ENCODE measurements at regions of chr20 and their contacts with region 1.

Region 1: GRCh38 chr20:34538671-34539123 is 19.8 kb upstream of the MAP1LC3A start:
- DNase-seq: peak; percentile 45
- H3K4me3 ChIP-seq: no peak overlapping the region
- H3K27ac ChIP-seq: no peak overlapping the region
- H3K4me1 ChIP-seq: no peaks in the 10 kb centered on the region
- H3K27me3 ChIP-seq: no peaks in the 10 kb centered on the region
- CTCF ChIP-seq: peak; percentile 67

Region 2: GRCh38 chr20:34324541-34324940 is 214.2 kb before region 1 on chr20:
- CTCF ChIA-PET with region 1: no interaction called
- POLR2A ChIA-PET with region 1: no interaction called
- intact Hi-C with region 1: no loop called
- DNase-seq: no peak
- H3K4me3 ChIP-seq: no peak overlapping the region
- H3K27ac ChIP-seq: no peak overlapping the region
- H3K4me1 ChIP-seq: peaks cover 14% of the 10 kb centered on the region
- H3K27me3 ChIP-seq: no peaks in the 10 kb centered on the region
- CTCF ChIP-seq: no peak

Region 3: GRCh38 chr20:34704177-34705007 is 165.7 kb after region 1 on chr20 and contains the start of gene TP53INP2:
- CTCF ChIA-PET with region 1: interaction called, 3 read pairs
- POLR2A ChIA-PET with region 1: no interaction called
- intact Hi-C with region 1: loop called (anchors 5 kb)
- DNase-seq: peak; percentile 90
- H3K4me3 ChIP-seq: peak within 1 kb of the TSS; percentile 81
- H3K27ac ChIP-seq: peak within 1 kb of the TSS; percentile 99
- H3K4me1 ChIP-seq: peaks cover 12% of the 10 kb centered on the region
- H3K27me3 ChIP-seq: no peaks in the 10 kb centered on the region
- CTCF ChIP-seq: no peak
- total RNA-seq, gene TP53INP2: 7.2 and 8.4 TPM in 2 replicates

Region 4: DNA sequence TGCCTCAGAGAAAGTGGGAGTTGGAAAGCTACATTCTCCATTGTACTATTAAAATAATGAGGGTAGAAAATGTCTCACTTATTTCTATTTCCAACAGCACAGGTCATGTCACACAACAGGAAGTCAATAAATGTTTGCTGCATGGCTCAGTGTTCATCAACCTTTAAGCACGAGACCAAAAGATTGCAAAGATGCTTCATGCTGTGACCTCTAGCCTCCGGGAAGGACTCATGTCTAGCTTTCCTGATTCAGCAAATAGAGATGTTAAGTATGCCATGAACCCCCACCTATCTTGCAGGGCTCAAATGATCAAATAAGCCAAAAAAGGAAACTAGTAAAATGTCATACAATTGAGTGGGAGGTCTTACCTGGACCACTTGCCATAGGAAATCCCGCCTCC is 229.4 kb after region 1 on chr20:
- CTCF ChIA-PET with region 1: interaction called, 4 read pairs
- POLR2A ChIA-PET with region 1: no interaction called
- intact Hi-C with region 1: loop called (anchors 5 kb)
- DNase-seq: no peak
- H3K4me3 ChIP-seq: no peak overlapping the region
- H3K27ac ChIP-seq: no peak overlapping the region
- H3K4me1 ChIP-seq: no peaks in the 10 kb centered on the region
- H3K27me3 ChIP-seq: no peaks in the 10 kb centered on the region
- CTCF ChIP-seq: no peak